Ovary (tissue), 10 donors: ENCODE measurements at regions of chr5 and their contacts with region 1.

Region 1: DNA sequence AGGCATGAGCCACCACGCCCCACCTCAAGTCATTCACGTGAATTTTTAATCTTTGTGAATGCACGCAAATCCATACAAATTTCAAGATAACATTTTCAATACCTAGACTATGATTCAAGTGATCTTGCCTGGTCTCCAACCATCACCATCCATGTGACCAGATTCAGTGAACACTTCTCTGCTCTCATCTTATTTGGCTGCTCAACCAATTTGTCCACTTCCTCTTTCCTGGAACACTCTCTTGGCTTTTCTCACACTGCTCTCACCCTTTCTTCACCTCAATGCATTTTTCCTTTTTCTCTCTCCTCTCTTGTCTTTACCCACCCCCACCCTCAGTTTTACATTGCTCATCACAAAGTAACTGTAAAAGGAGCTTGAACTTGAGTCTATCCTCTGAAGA is 354.7 kb upstream of the KIF2A start:
- DNase-seq: no peak
- H3K4me3 ChIP-seq: no peak overlapping the region
- H3K27ac ChIP-seq: no peak overlapping the region
- H3K4me1 ChIP-seq: no peaks in the 10 kb centered on the region
- H3K27me3 ChIP-seq: no peaks in the 10 kb centered on the region
- CTCF ChIP-seq: no peak
- EP300 ChIP-seq: no peak
- POLR2A ChIP-seq: no peak

Region 2: GRCh38 chr5:61933787-61934626 is 17.3 kb before region 1 on chr5:
- intact Hi-C with region 1: loop called in 1 of 4 experiments (anchors 1 kb)
- DNase-seq: peak; percentile 12 to 47 (median 29)
- H3K4me3 ChIP-seq: no peak overlapping the region
- H3K27ac ChIP-seq: no peak overlapping the region
- H3K4me1 ChIP-seq: no peaks in the 10 kb centered on the region
- H3K27me3 ChIP-seq: no peaks in the 10 kb centered on the region
- CTCF ChIP-seq: peak in 1 of 3 donors; percentile 39
- EP300 ChIP-seq: no peak
- POLR2A ChIP-seq: no peak

Region 3: GRCh38 chr5:62621280-62621679 is 670.0 kb after region 1 on chr5:
- intact Hi-C with region 1: no loop called
- DNase-seq: no peak
- H3K4me3 ChIP-seq: no peak overlapping the region
- H3K27ac ChIP-seq: no peak overlapping the region
- H3K4me1 ChIP-seq: no peaks in the 10 kb centered on the region
- H3K27me3 ChIP-seq: no peaks in the 10 kb centered on the region
- CTCF ChIP-seq: no peak
- EP300 ChIP-seq: no peak
- POLR2A ChIP-seq: no peak